Left ventricle myocardium inferior (tissue), 1 donor: ENCODE measurements at regions of chr6 and their contacts with region 1.

Region 1: GRCh38 chr6:134174672-134175198 is 122.3 kb upstream of the SLC2A12 start:
- DNase-seq: peak; percentile 94
- H3K4me3 ChIP-seq: peak overlapping the region; percentile 86
- H3K27ac ChIP-seq: peak overlapping the region; percentile 99
- H3K4me1 ChIP-seq: peaks cover 84% of the 10 kb centered on the region
- H3K27me3 ChIP-seq: no peaks in the 10 kb centered on the region
- CTCF ChIP-seq: no peak

Region 2: DNA sequence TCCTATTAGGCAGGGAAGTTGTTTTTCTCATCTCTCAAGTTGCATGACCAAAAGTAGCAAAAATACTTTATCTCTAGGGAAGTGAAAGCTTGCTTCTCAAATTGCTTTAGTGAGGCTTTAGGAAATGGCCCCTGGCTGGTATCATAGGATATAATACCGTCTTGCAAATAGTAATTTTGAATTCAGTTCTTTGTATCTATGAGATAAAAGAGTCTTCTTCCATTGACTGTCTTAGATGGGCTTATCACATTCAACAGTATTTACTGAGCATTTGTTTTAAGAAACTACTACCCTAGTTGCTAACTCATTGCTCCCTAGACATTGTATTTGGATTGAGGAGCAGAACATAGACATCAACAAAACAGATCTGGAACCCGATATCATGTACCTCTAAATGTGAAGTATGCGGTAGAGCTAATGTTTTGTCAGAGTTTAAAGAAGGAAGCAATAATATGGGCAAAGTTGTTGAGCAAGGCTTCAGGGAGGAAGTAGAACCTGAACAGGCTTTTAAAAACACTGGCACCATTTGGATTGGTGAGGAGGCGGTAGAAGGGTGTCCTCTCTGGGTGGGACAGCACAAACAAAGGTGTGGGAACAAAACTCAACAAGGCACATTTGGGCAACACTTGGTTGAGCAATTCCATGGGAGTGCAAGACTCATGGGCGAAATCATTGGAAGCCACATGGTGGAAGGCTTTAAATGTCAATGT is 41.7 kb after region 1 on chr6:
- intact Hi-C with region 1: no loop called
- DNase-seq: no peak
- H3K4me3 ChIP-seq: no peak overlapping the region
- H3K27ac ChIP-seq: no peak overlapping the region
- H3K4me1 ChIP-seq: no peaks in the 10 kb centered on the region
- H3K27me3 ChIP-seq: no peaks in the 10 kb centered on the region
- CTCF ChIP-seq: no peak

Region 3: DNA sequence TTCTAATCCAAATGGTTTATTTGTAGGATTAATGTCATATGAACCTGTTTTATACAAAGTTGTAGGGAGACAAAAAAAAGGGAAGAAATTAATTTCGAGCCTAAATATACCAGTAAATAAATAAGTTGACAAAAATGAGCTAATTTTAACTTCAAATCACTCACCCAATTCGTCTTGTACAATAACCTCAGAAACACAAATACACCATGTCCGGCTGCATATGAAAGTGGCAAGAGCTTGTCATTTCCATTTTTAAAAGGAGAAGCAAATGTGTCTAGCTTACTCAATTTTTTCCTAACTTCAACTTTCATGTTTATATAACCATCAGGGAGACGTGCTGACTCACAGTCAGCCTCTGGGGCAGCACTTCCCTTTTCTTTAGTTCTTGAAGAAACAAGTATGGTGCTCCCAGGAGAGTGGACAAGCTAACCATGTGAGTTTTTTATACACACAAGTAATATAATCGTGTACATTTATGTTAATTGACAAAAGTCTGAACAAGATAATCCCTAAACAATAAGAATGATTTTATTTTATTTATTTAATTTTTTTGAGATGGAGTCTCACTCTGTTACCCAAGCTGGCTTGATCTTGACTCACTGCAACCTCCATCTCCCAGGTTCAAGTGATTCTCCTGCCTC is 198.7 kb after region 1 on chr6:
- intact Hi-C with region 1: no loop called
- DNase-seq: peak; percentile 23
- H3K4me3 ChIP-seq: no peak overlapping the region
- H3K27ac ChIP-seq: peak overlapping the region; percentile 61
- H3K4me1 ChIP-seq: peaks cover 17% of the 10 kb centered on the region
- H3K27me3 ChIP-seq: no peaks in the 10 kb centered on the region
- CTCF ChIP-seq: no peak

Region 4: GRCh38 chr6:134640975-134641429 is 466.3 kb after region 1 on chr6:
- intact Hi-C with region 1: loop called (anchors 5 kb)
- DNase-seq: peak; percentile 73
- H3K4me3 ChIP-seq: no peak overlapping the region
- H3K27ac ChIP-seq: peak overlapping the region; percentile 9
- H3K4me1 ChIP-seq: peaks cover 20% of the 10 kb centered on the region
- H3K27me3 ChIP-seq: no peaks in the 10 kb centered on the region
- CTCF ChIP-seq: peak; percentile 98

Region 5: GRCh38 chr6:134822920-134823709 is 648.4 kb after region 1 on chr6:
- intact Hi-C with region 1: loop called (anchors 5 kb)
- DNase-seq: peak; percentile 24
- H3K4me3 ChIP-seq: no peak overlapping the region
- H3K27ac ChIP-seq: no peak overlapping the region
- H3K4me1 ChIP-seq: peaks cover 15% of the 10 kb centered on the region
- H3K27me3 ChIP-seq: no peaks in the 10 kb centered on the region
- CTCF ChIP-seq: peak; percentile 94